Cardiac septum (tissue), 1 donor: ENCODE measurements at regions of chr1 and their contacts with region 1.

Region 1: DNA sequence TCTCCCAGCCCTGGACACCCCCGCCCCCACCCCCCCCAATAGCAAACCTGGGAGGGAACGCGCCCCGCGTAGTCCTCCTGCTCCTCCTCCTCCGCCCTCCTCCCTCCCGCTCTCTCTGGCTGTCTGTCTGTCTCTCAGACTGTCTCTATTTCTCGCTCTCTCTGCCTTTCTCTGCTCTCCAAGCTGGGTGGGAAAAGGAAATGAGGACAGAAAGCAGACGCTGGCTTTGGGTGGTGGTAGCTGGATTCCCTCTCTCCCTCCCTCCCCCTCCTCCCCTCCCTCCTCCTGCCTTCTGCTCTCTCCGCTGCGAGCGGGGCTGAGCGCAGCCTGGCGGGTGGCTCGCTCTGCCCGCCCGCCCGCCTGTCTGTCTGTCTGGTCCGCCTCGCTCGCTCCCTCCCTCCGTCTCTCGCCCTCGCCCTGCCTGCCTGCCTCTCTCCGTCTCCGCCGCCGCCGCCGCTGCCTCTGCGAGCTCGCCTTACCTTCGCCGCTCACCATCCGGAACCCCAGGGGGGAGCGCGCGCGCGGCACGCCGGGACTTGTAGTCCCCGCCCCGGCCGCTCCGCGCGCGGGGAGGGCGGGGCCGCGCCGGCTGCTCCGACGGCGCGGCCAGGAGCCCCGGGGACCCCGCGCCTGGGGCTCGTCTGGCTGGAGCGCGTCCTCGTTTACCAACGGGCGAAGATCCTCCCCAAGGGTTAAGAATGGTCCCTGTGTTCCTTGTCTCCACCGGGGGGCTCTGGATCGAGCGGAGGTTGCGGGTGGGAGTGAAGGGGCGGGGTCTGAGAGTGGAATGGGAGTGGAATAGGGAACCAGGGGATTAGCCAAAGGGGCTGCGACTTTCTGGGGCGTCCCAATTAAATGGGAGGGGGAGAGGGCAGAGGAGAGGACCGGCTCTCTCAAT is at the start of gene AHDC1:
- DNase-seq: peak; percentile 95
- total RNA-seq, gene AHDC1: 57.7 TPM

Region 2: DNA sequence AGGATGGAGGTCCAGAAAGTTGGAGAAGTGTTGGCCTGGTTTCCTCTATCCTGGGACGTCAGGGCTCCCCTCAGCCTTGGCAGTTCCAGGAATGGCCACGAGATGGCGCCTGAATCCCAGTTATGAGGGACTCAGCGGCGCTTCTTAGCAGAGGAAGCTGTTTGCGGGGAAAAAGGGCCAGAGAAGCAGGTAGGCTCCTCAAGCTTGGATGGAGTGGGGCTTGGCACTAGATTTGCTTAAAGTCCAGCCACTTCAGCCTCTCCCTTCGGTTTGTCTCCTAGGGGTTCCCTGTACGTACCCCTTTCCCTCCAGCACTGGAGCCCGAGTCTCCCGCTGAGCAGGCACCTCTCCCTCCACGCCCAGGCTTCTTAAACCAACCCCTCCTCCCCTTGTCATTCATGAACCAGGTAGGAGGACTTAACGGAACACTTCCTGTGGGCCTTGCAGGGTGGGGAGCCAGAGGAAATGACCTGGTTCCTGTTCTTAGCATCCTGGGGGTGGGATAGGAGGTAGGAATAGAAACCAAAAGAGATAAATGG is 559.2 kb before region 1 on chr1:
- intact Hi-C with region 1: loop called (anchors 10 kb)
- DNase-seq: peak; percentile 95

Region 3: GRCh38 chr1:27392096-27392777 is 211.7 kb before region 1 on chr1 and contains the start of gene GPR3:
- intact Hi-C with region 1: loop called (anchors 2 kb)
- DNase-seq: peak; percentile 94
- total RNA-seq, gene GPR3: 2.3 TPM

Region 4: DNA sequence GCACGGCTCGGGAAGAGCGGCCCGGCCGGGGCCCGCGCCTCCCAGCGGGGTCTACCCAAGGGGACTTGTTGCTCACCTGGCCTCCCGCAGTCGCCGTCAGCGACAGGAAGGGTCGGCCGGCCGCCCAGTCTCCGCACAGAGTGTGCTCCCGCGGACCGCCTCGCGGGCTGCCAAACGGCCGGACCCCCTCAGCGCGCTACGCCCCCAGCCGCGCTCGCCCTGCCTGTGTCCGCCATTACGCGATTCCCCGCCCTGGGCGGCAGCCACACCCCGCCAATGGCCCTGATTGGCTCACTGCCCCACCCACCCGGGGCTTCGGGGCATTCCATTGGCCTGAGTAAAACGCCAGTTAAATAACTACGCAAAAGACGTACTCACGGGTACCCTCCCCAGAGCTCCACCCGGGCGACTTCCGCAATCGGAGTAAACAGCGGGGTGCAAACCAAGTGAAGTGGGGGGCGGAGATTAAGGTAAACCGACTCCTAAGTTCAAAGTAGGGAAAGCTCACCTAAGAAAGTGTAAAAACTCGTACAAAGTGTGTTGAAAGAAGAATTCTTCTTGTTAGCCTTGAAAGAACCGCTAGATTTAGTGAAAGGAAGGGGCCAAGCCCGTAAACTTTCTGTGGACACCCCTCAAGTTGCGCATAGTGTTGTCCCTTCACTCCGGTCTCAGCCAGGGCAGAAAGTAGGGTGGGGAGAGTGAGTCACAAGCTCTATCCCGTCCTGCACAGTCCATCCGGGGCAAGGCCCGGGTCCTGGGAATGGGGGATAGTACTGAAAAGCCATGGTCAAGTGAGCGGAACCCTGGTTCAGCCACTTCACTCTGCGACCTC is 113.8 kb before region 1 on chr1 and contains the start of gene WASF2:
- intact Hi-C with region 1: loop called (anchors 2 kb)
- DNase-seq: peak; percentile 99
- total RNA-seq, gene WASF2: 59.3 TPM

Region 5: GRCh38 chr1:27556781-27557595 is 46.9 kb before region 1 on chr1:
- intact Hi-C with region 1: loop called (anchors 2 kb)
- DNase-seq: peak; percentile 93

Region 6: GRCh38 chr1:27574871-27575831 is 28.8 kb before region 1 on chr1:
- intact Hi-C with region 1: loop called (anchors 1 kb)
- DNase-seq: peak; percentile 92